ENCODE measurements at regions of chr2 and their contacts with region 1.

Region 1: DNA sequence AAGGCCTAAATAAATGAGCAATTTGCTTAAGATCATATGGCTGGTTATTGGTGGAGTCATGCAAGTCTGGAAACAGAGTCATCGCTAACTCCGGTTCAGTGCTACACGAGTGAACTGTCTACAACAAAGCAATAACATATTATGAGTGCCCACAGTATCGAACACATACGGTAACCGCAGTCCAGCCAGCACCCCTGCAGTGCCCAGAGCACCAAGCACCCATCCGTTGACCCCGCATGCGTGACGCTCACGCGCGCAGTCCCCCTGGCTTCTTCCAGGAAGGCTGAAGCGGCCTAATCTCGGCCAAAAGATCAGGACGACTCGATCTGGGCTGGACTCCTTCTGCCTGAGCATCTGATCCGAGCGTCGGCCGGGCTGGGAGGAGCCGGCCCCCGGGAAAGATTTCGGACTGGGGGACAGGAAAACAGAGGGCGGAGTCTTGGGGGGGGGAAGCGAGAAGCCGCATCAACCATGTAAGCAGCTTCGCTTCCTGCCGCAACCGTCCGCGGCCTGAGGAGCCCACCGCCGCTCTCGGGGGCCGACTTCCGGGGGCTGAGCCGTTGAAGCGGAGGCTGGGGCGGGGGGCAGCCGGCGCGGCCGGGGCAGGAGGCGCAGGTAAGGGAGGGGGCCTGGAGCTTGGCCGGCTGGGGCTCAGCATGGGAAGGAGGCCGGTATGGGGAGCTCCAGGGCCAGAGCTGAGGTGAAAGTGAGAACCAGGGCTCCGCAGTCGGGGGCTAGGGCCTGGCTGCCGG is at the start of gene PIKFYVE:
- DNase-seq: peak; percentile 98 to 99 (median 98)
- H3K4me3 ChIP-seq: peak within 1 kb of the TSS; percentile 45 to 97 (median 81)
- H3K27ac ChIP-seq: peak within 1 kb of the TSS; percentile 86 to 95
- H3K4me1 ChIP-seq: peaks cover 21 to 40% (median 35%) of the 10 kb centered on the region in 4 experiments
- H3K27me3 ChIP-seq: no peaks in the 10 kb centered on the region

Region 2: DNA sequence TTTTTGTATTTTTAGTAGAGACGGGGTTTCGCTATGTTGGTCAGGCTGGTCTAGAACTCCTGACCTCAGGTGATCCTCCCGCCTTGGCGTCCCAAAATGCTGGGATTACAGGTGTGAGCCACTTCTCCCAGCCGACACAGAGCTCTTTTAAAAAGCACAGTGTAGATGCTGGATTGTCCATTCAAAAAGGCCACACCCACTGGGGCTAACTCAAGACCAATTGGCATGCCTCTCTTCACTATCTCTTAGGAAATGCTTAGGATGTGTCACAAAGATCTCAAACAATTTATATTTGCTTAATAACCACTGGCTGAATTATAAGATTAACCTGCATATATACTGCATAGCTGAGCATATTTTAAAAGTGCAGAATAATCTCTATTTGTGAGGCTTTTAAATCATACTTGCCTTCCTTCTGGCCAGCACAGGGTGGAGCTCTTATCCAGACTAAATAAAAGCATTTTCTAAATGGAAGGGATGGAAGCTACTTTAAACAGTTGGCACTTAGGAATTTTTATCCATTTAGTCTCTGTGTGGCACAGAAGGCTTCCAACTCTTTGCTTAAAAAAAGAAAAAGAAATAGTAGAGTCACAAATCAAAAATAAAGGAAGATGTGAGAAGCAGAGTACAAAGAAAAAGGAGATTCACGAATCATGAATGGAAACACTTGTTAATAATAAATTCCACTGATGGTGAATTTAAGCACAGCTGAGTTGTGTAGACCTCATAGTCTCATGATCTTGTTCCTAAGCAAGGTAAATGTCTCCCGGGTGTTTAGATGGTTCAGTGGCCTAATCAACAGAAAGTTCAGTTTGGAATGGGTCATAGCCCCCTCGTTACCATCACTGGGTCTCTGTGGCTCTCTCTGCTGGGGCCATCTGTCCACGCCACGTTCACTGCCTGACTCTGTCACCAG is 164.0 kb before region 1 on chr2:
- CTCF ChIA-PET with region 1: interaction called, 12 read pairs
- POLR2A ChIA-PET with region 1: no interaction called
- DNase-seq: peak; percentile 46 to 50 (median 48)
- H3K4me3 ChIP-seq: peak overlapping the region in 5 of 7 experiments; percentile 9 to 67 (median 23)
- H3K27ac ChIP-seq: no peak overlapping the region
- H3K4me1 ChIP-seq: peaks cover 7 to 28% (median 15%) of the 10 kb centered on the region in 4 experiments
- H3K27me3 ChIP-seq: no peaks in the 10 kb centered on the region

Region 3: DNA sequence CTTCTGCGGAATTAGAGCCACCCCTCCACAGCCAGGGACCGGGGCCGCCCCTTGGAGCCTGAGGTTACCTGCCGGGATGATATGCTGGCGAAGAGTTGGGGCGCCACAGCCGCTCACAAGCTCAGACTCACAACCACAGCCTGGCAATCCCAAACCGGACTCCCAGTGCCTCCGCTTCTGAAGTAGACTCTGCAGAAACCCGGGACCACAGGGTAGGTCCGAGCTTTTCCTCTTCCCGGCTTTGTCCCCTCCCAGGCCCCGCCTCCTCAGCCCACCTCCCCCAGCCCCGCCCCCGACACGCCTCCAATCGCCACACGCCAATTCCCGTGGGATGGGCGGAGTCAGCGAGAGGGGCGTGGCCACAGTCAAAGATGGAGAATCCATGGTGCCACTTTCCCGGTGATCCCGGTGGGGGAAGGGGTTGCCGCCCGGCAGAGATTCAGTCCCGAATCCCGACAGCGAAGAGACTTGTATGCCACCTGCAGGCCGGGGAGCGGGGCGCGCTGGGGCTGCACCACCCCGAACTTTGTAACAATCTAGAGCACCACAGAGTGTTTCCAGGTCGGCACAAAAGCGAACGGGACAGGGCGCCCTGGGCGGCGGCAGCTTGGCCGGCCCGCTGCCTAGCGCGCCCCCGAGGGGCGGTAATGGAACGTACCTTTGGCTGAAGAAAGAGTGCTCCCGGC is 11.0 kb before region 1 on chr2 and contains the start of gene IDH1:
- CTCF ChIA-PET with region 1: interaction called, 100 read pairs
- POLR2A ChIA-PET with region 1: interaction called, 7 read pairs
- DNase-seq: peak; percentile 87 to 91 (median 89)
- H3K4me3 ChIP-seq: peak within 1 kb of the TSS; percentile 75 to 99 (median 91)
- H3K27ac ChIP-seq: peak within 1 kb of the TSS; percentile 25 to 79
- H3K4me1 ChIP-seq: peaks cover 30 to 48% (median 41%) of the 10 kb centered on the region in 4 experiments
- H3K27me3 ChIP-seq: no peaks in the 10 kb centered on the region

Region 4: GRCh38 chr2:208280933-208281332 is 15.0 kb after region 1 on chr2:
- CTCF ChIA-PET with region 1: interaction called, 26 read pairs
- POLR2A ChIA-PET with region 1: no interaction called
- DNase-seq: peak in 2 of 3 donors; percentile 48 to 54
- H3K4me3 ChIP-seq: no peak overlapping the region
- H3K27ac ChIP-seq: no peak overlapping the region
- H3K4me1 ChIP-seq: peaks cover 4 to 22% (median 18%) of the 10 kb centered on the region in 4 experiments
- H3K27me3 ChIP-seq: no peaks in the 10 kb centered on the region

Measured in common myeloid progenitor, CD34-positive (primary cell).